ENCODE measurements at regions of chr20 and their contacts with region 1.

Region 1: DNA sequence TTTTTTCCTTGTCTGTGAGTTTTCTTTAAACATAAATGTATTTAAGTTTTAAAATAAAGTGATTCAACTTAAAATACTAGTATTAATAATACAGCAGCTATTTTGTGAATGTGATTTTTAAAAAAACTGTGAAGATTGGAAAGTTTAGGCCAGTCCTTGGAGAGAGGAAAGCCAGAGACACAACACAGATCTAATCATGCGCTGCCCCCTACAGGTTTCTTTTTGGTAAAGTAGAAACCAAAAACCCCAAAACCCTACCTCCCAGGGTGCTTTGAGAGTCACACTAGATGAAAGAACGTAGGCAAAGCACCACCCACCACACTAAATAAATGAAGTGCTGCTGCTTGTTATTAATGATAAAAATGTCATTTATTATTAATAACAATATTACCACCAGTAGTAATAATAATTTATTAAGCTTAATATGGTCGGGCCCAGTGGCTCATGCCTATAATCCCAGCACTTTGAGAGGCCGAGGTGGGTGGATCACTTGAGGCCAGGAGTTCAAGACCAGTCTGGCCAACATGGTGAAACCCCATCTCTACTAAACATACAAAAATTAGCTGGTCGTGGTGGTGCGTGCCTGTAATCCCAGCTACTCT is 33.7 kb downstream of the SLC9A8 start:
- DNase-seq: no peak
- H3K4me3 ChIP-seq: no peak overlapping the region
- H3K27me3 ChIP-seq: no peaks in the 10 kb centered on the region
- CTCF ChIP-seq: peak; percentile 59

Region 2: GRCh38 chr20:49821870-49822331 is 24.4 kb before region 1 on chr20:
- CTCF ChIA-PET with region 1: interaction called, 16 read pairs
- POLR2A ChIA-PET with region 1: no interaction called
- DNase-seq: no peak
- H3K4me3 ChIP-seq: no peak overlapping the region
- H3K27me3 ChIP-seq: no peaks in the 10 kb centered on the region
- CTCF ChIP-seq: peak; percentile 58

Region 3: GRCh38 chr20:49832632-49833327 is 13.5 kb before region 1 on chr20:
- CTCF ChIA-PET with region 1: interaction called, 12 read pairs
- POLR2A ChIA-PET with region 1: no interaction called
- DNase-seq: no peak
- H3K4me3 ChIP-seq: no peak overlapping the region
- H3K27me3 ChIP-seq: no peaks in the 10 kb centered on the region
- CTCF ChIP-seq: no peak